CD8-positive, alpha-beta T cell (primary cell): ENCODE measurements at regions of chr22 and their contacts with region 1.

Region 1: DNA sequence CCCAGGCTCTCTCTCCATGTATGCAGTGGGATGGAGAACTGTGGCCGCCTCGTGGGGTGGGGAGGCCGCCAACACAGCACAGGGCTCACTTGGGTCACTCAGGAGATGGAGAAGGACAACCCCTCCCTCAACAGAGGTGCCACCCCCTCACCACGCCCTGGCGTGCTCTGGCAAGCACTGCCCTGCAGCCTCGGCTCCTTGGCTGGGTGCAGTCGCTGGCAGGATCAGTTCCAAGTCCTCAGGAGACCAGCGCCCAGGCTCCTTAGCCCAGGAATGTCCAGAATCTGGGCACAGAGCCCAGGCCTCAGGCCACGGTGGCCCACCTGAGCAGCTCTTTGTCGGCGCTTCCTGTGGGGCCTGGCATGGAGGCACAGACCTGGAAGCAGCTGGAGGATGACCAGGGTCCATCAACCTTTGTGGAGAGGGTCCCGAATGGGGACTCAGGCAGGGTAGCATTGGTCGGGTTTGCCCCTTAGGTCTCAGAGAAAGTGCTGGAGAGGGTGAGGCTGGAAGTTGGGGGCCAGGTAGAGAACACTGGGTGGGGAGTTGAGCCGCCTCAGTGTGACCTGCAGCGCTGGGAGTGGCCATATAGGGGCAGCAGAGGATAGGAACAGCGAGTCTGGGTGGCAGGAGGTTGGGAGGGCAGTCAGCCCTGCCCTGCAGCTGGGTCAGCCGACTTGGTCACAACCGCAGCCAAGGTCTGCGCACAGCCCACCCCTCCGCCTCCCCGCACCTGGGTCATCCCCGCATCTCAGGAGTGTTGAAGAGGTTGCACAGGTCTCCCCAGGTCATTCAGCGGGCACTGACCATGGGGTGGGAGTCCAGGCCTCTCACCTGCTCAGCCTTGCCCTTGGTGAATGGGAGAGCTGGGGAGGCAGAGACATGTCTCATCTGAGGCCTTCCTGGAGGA is 8.2 kb downstream of the SUSD2 start:
- DNase-seq: peak in 5 of 9 experiments; percentile 29 to 63 (median 43)
- ATAC-seq: peak; percentile 71
- H3K4me3 ChIP-seq: no peak overlapping the region
- H3K4me3 Mint-ChIP-seq: no peak overlapping the region
- H3K27ac ChIP-seq: no peak overlapping the region
- H3K27ac Mint-ChIP-seq: no peak overlapping the region
- H3K4me1 ChIP-seq: no peaks in the 10 kb centered on the region
- H3K4me1 Mint-ChIP-seq: no peaks in the 10 kb centered on the region
- H3K27me3 ChIP-seq: no peaks in the 10 kb centered on the region
- H3K27me3 Mint-ChIP-seq: no peaks in the 10 kb centered on the region
- CTCF ChIP-seq: peak; percentile 32

Region 2: GRCh38 chr22:24011735-24012068 is 177.8 kb before region 1 on chr22:
- CTCF ChIA-PET with region 1: no interaction called
- POLR2A ChIA-PET with region 1: no interaction called
- intact Hi-C with region 1: no loop called
- DNase-seq: no peak
- ATAC-seq: no peak
- H3K4me3 ChIP-seq: peak overlapping the region; percentile 71 to 87
- H3K4me3 Mint-ChIP-seq: peak overlapping the region; percentile 97
- H3K27ac ChIP-seq: peak overlapping the region; percentile 69 to 77
- H3K27ac Mint-ChIP-seq: peak overlapping the region; percentile 94
- H3K4me1 ChIP-seq: peaks cover 10% of the 10 kb centered on the region
- H3K4me1 Mint-ChIP-seq: peaks cover 40% of the 10 kb centered on the region
- H3K27me3 ChIP-seq: no peaks in the 10 kb centered on the region
- H3K27me3 Mint-ChIP-seq: no peaks in the 10 kb centered on the region
- CTCF ChIP-seq: no peak

Region 3: DNA sequence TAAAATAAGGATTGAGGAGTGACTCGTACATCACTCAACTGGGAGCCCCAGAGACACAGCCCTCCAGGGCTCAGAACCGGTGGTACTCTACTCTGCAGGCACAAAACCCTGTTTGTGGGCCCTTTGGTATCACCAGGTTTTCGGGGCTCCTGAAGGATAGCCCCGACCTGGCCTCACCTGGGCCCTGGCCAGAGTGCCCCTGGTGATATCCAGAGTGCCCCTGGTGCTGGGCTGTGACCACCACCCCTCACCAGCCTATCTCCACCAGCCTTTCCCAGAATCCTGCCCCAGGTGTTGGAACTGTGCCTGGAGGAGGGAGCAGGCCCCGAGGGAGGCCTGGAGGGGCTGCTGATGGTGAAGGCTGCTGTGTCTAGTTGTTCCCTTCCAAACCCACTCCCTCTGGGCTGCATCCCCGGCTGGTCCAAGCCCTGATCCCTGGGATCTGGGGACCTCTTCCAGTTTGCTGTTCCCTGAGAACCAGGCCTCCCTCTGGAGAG is 57.6 kb after region 1 on chr22:
- CTCF ChIA-PET with region 1: interaction called, 9 read pairs
- POLR2A ChIA-PET with region 1: no interaction called
- intact Hi-C with region 1: loop called (anchors 1 to 2 kb)
- DNase-seq: no peak
- ATAC-seq: no peak
- H3K4me3 ChIP-seq: no peak overlapping the region
- H3K4me3 Mint-ChIP-seq: no peak overlapping the region
- H3K27ac ChIP-seq: no peak overlapping the region
- H3K27ac Mint-ChIP-seq: no peak overlapping the region
- H3K4me1 ChIP-seq: peaks cover 25% of the 10 kb centered on the region
- H3K4me1 Mint-ChIP-seq: peaks cover 24% of the 10 kb centered on the region
- H3K27me3 ChIP-seq: no peaks in the 10 kb centered on the region
- H3K27me3 Mint-ChIP-seq: no peaks in the 10 kb centered on the region
- CTCF ChIP-seq: no peak

Region 4: GRCh38 chr22:24525416-24526037 is 336.0 kb after region 1 on chr22:
- CTCF ChIA-PET with region 1: no interaction called
- POLR2A ChIA-PET with region 1: no interaction called
- intact Hi-C with region 1: loop called in 1 of 2 experiments (anchors 1 kb)
- DNase-seq: peak; percentile 58 to 85 (median 72)
- ATAC-seq: peak; percentile 96
- H3K4me3 ChIP-seq: no peak overlapping the region
- H3K4me3 Mint-ChIP-seq: no peak overlapping the region
- H3K27ac ChIP-seq: no peak overlapping the region
- H3K27ac Mint-ChIP-seq: no peak overlapping the region
- H3K4me1 ChIP-seq: no peaks in the 10 kb centered on the region
- H3K4me1 Mint-ChIP-seq: peaks cover 9% of the 10 kb centered on the region
- H3K27me3 ChIP-seq: no peaks in the 10 kb centered on the region
- H3K27me3 Mint-ChIP-seq: no peaks in the 10 kb centered on the region
- CTCF ChIP-seq: peak; percentile 92